Activated naive CD4-positive, alpha-beta T cell treated with anti-CD3 and anti-CD28 coated beads for 36 hours (primary cell): ENCODE measurements at regions of chr12 and their contacts with region 1.

Region 1: GRCh38 chr12:66130277-66131066 is at the start of gene LLPH:
- DNase-seq: peak; percentile 94
- H3K4me3 Mint-ChIP-seq: peak within 1 kb of the TSS; percentile 96
- H3K27ac Mint-ChIP-seq: peak within 1 kb of the TSS; percentile 95
- H3K4me1 Mint-ChIP-seq: peaks cover 53% of the 10 kb centered on the region
- H3K27me3 Mint-ChIP-seq: no peaks in the 10 kb centered on the region
- total RNA-seq, gene LLPH: 25.6 to 26.0 TPM

Region 2: DNA sequence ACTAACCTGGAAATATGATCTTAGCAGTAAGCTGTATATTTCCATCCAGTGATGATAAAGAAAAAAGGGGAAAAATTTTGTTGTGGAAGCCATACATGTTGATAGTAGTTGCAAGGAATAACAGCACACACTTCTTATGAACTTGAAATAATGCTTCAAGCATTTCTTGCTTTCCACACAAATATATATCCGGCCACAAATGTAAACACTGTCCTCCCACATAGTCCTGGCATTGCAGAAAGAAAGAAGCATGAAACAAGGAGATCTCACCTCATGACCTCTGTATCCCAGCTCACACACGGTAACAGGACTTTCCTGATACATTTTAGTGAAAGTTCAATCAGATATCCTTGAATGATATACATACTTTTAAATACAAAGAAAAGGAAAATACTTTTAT is 55.9 kb before region 1 on chr12:
- CTCF ChIA-PET with region 1: no interaction called
- intact Hi-C with region 1: no loop called
- DNase-seq: no peak
- H3K4me3 Mint-ChIP-seq: no peak overlapping the region
- H3K27ac Mint-ChIP-seq: no peak overlapping the region
- H3K4me1 Mint-ChIP-seq: peaks cover 3% of the 10 kb centered on the region
- H3K27me3 Mint-ChIP-seq: peaks cover 21% of the 10 kb centered on the region

Region 3: DNA sequence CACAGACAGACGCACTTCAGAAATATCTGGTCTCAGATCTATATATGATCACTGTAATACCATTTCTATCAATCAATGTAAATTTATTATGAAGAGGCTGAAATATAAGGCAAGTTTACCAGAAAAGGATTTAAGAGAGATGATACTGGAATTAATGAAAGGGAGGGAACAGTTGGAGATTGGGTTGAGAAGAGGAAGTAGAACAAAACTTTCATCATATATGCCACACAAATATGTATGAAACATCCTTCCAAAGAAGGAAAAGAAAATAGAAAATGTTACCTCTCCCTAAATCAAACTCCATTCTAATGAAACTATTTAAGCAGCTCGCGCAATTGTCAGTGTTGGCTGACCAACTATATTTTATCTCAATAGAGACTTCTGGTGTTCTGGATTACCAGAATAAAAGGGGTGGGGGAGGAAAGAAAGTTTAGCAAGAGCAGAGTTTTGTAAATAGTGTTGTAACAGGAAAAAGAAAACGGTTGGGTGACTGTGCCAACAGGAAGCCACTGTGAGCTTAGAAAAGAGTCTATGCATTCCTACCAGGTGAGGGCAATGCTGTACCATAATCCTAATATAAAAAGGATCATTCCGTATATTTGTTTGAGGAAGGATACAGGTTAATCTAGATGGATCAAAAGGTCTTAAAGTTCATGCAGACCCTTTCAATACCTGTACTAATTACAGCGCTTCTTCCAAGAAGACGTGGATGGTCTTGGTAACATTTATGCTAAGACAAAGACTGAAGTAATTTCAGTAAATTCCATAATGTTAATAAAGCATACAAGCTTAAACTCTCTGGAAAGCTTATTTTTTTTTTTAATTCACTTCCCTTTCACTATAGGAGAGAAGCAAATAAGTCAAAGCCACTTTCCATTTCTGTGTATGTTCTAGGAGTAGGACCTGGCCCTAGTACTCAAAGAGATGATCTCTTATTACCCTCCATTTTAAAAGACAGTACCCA is 14.6 kb after region 1 on chr12:
- CTCF ChIA-PET with region 1: interaction called, 11 read pairs
- intact Hi-C with region 1: no loop called
- DNase-seq: peak; percentile 49
- H3K4me3 Mint-ChIP-seq: no peak overlapping the region
- H3K27ac Mint-ChIP-seq: peak overlapping the region; percentile 86
- H3K4me1 Mint-ChIP-seq: peaks cover 16% of the 10 kb centered on the region
- H3K27me3 Mint-ChIP-seq: no peaks in the 10 kb centered on the region

Region 4: GRCh38 chr12:66188584-66189485 is 58.4 kb after region 1 on chr12 and contains the start of gene IRAK3:
- CTCF ChIA-PET with region 1: no interaction called
- intact Hi-C with region 1: no loop called
- DNase-seq: peak; percentile 41
- H3K4me3 Mint-ChIP-seq: peak within 1 kb of the TSS; percentile 71
- H3K27ac Mint-ChIP-seq: no peak within 1 kb of the TSS
- H3K4me1 Mint-ChIP-seq: peaks cover 6% of the 10 kb centered on the region
- H3K27me3 Mint-ChIP-seq: peaks cover 48% of the 10 kb centered on the region
- total RNA-seq, gene IRAK3: 0.32 to 0.38 TPM

Region 5: GRCh38 chr12:66203820-66204219 is 73.3 kb after region 1 on chr12:
- CTCF ChIA-PET with region 1: no interaction called
- intact Hi-C with region 1: loop called (anchors 1 kb)
- DNase-seq: peak; percentile 29
- H3K4me3 Mint-ChIP-seq: no peak overlapping the region
- H3K27ac Mint-ChIP-seq: peak overlapping the region; percentile 1
- H3K4me1 Mint-ChIP-seq: peaks cover 18% of the 10 kb centered on the region
- H3K27me3 Mint-ChIP-seq: peaks cover 3% of the 10 kb centered on the region

Region 6: GRCh38 chr12:66269757-66270383 is 139.4 kb after region 1 on chr12:
- CTCF ChIA-PET with region 1: no interaction called
- intact Hi-C with region 1: loop called (anchors 1 kb)
- DNase-seq: peak; percentile 52
- H3K4me3 Mint-ChIP-seq: no peak overlapping the region
- H3K27ac Mint-ChIP-seq: no peak overlapping the region
- H3K4me1 Mint-ChIP-seq: peaks cover 5% of the 10 kb centered on the region
- H3K27me3 Mint-ChIP-seq: peaks cover 3% of the 10 kb centered on the region